H1 (cell line): ENCODE measurements at regions of chr20 and their contacts with region 1.

Region 1: GRCh38 chr20:44909872-44910689 is at the start of gene PABPC1L:
- DNase-seq: peak; percentile 87
- H3K4me3 ChIP-seq: peak within 1 kb of the TSS; percentile 65 to 89 (median 82)
- H3K27ac ChIP-seq: peak within 1 kb of the TSS; percentile 33; the same call in 1 of the 2 replicates
- H3K4me1 ChIP-seq: peaks cover 0 to 6% (median 1%) of the 10 kb centered on the region in 4 experiments; a peak in 5 of 7 replicates
- H3K27me3 ChIP-seq: no peaks in the 10 kb centered on the region
- CTCF ChIP-seq: no peak
- EP300 ChIP-seq: no peak
- POLR2A ChIP-seq: peak in 1 of 2 experiments; percentile 16; a peak in 1 of 3 replicates
- RAD21 ChIP-seq: no peak
- total RNA-seq, gene PABPC1L: 60.9 and 61.1 TPM in 2 replicates

Region 2: DNA sequence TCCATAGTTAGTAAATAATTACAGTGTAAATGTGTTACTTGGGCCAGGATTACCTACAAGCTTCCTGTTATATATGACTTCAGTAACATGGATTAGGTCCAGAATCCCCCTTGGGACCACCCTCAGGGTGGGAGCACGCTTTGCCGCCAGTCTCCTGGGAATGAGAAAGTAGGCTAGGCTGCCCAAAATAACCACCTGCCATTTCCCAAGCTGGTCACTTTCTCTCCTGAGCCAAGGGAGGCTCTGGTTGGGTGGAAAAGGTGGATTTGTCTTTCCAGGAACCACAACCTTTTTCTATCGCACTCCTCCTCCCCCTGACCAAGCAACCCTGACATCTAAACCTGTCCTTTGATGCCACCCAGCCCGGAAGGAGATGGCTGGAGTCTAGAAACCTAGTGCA is 90.1 kb before region 1 on chr20:
- CTCF ChIA-PET with region 1: no interaction called
- POLR2A ChIA-PET with region 1: no interaction called
- DNase-seq: no peak
- H3K4me3 ChIP-seq: no peak overlapping the region
- H3K27ac ChIP-seq: no peak overlapping the region
- H3K4me1 ChIP-seq: peaks cover 0 to 4% (median 1%) of the 10 kb centered on the region in 4 experiments; a peak in 1 of 7 replicates
- H3K27me3 ChIP-seq: no peaks in the 10 kb centered on the region
- CTCF ChIP-seq: no peak
- EP300 ChIP-seq: no peak
- POLR2A ChIP-seq: no peak
- RAD21 ChIP-seq: no peak

Region 3: DNA sequence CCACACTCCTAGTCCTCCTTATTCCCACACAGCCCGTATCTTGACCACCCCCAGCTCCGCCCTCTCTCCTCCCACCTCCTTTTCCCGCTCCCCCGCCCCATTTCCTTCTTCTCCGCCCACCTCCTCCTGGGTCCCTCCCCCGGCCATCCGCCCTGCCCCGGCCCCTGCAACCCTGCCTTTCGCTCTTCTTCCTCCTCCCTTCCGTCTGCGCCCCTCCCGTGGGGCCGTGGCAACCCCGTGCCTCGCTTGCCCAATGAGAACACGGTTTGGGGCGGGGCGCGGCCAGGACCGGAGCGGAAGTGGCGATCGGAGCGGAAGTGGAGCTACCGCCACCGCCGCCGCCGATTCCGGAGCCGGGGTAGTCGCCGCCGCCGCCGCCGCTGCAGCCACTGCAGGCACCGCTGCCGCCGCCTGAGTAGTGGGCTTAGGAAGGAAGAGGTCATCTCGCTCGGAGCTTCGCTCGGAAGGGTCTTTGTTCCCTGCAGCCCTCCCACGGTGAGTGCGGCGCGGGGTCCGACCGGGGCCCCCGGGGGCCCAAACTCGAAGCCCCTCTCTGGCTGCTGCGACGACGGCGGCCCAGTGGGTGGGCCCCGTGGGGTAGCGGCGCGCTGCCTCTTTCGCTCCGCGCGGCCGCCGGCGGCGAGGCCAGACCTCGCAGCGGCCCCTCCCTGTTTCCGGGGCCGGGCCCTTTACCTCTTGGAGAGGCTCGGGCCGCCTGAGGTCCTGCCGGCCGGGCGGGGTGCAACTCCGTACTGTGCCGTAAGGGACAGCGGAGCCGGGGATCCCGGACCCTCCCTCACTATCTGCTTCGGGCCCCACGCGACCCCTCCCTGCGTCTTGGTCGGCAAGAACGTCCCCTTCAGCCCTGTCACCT is 24.5 kb before region 1 on chr20 and contains the start of gene YWHAB:
- CTCF ChIA-PET with region 1: interaction called, 4 read pairs
- POLR2A ChIA-PET with region 1: interaction called, 30 read pairs
- DNase-seq: peak; percentile 95 to 98
- H3K4me3 ChIP-seq: peak within 1 kb of the TSS; percentile 86 to 96 (median 92)
- H3K27ac ChIP-seq: peak within 1 kb of the TSS; percentile 72; the same call in 1 of the 2 replicates
- H3K4me1 ChIP-seq: peaks cover 0 to 9% (median 7%) of the 10 kb centered on the region in 4 experiments; a peak in 5 of 7 replicates
- H3K27me3 ChIP-seq: no peaks in the 10 kb centered on the region
- CTCF ChIP-seq: peak in 1 of 3 experiments; percentile 13; a peak in 1 of 4 replicates
- EP300 ChIP-seq: peak in 1 of 2 experiments; percentile 3; a peak in 1 of 3 replicates
- POLR2A ChIP-seq: 0 out of 3 replicates have a peak, but pooled peaks of 1 of the 2 experiments have one; percentile 70
- RAD21 ChIP-seq: no peak
- total RNA-seq, gene YWHAB: 246 and 256 TPM in 2 replicates

Region 4: DNA sequence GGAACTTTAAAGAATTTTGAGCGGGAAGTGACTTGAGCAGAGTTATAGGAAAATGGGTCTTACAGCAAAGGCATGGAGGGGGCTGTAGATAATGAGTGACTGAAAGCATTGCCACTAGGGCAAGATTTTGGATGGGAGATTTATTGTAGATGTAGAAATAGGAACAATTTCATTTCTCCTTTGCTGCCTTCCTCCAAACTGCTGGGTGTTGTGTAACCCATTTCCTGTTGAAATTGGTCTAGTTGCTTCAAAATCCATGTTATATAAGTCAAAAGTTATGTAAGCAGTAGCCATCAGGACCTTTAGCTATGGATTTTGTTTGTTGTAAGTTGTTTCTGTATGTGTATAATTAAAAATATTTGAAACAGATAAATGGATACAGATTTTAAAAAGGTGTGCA is 13.5 kb before region 1 on chr20:
- CTCF ChIA-PET with region 1: interaction called, 7 read pairs
- POLR2A ChIA-PET with region 1: interaction called, 38 read pairs
- DNase-seq: no peak
- H3K4me3 ChIP-seq: no peak overlapping the region
- H3K27ac ChIP-seq: no peak overlapping the region
- H3K4me1 ChIP-seq: no peaks in the 10 kb centered on the region
- H3K27me3 ChIP-seq: no peaks in the 10 kb centered on the region
- CTCF ChIP-seq: no peak
- EP300 ChIP-seq: no peak
- POLR2A ChIP-seq: no peak
- RAD21 ChIP-seq: no peak